ENCODE measurements at regions of chr16 and their contacts with region 1.

Region 1: DNA sequence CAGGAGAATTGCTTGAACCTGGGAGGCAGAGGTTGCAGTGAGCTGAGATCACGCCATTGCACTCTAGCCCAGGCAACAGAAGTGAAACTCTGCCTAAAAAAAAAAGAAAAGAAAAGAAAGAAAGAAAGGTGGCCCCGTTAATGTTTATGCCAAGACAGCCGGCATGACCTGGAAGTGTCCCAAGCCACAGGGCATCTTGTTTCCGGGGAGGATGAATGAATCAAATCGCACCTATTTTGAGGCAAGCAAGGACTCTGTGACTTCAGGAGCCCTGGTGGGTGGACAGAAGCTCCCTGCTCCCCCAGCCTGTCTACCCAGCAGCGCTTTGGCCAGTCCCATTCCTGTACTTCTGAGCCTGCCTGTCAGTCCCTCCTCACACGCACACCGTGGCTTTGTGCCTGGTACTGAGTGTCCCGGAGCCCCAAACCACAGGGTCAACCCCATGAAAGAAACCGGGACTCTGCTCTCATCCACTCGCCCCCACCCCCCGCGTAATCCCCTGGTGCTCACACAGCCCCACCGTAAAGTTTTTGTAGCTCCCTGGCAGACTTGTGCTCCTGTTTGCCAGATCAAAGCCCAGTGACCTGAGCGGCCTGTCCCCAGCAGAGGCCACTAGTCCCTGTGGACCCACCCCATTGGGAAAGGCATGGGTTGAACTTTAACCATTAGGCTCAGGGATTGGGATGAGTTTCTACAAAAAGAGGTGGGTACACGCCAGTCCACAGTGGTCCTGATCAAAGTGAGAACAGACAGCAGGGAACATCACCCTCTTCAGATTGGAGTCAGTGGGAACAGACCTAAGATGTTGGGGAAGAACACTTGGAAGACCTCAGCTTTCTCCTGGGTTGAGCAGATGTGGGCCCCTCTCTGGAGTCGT is 19.3 kb downstream of the CD2BP2 start:
- DNase-seq: peak; percentile 64 to 75
- ATAC-seq: peak; percentile 52 to 67
- H3K4me3 ChIP-seq: peak overlapping the region; percentile 66 to 85 (median 77)
- H3K27ac ChIP-seq: peak overlapping the region; percentile 89 to 99 (median 96)
- H3K4me1 ChIP-seq: peaks cover 5 to 32% of the 10 kb centered on the region in 2 donors
- H3K27me3 ChIP-seq: no peaks in the 10 kb centered on the region
- CTCF ChIP-seq: no peak
- POLR2A ChIP-seq: no peak

Region 2: DNA sequence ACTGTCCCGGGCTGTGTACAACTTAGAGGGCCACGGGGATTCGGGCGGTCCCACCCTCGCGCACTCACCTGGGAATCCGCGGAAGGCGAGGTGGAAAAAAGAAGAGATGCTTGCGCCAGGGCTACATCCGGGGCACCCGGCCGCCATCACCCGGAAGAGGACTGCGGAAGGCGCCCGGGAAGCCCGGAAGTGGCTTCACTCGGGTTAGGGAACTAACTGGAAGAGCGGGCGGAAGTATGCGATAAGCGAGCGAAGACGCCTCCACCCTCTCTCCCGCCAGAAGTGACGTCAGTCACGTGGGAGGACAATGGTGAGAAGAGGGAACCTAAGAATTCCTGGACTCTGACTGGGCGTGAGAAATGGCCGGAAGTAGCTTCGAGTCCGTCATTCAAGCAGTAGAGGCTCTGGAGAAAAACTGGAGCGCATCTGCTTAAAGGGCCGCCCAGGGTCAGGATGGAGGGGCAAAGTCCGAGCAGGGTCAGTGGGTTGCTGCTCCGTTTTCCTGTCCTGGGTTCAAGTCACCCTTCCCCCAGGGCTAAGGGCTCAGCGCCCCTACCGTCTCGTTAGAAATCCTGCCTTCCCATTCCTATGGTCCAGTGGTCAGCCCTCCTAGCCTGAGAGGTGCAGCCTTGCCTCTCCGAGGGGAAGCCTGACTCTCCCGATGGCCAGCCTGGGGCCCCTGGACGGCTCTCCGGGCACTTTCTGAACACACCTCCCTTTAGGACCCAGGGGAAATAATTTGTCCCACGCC is 19.5 kb after region 1 on chr16 and contains the start of gene CD2BP2:
- in situ Hi-C with region 1: no loop called
- intact Hi-C with region 1: loop called (anchors 1 kb)
- DNase-seq: peak; percentile 96 to 97
- ATAC-seq: peak; percentile 91 to 92
- H3K4me3 ChIP-seq: peak within 1 kb of the TSS; percentile 96 to 100 (median 97)
- H3K27ac ChIP-seq: peak within 1 kb of the TSS; percentile 92 to 97 (median 94)
- H3K4me1 ChIP-seq: peaks cover 43 to 48% of the 10 kb centered on the region in 2 donors
- H3K27me3 ChIP-seq: no peaks in the 10 kb centered on the region
- CTCF ChIP-seq: no peak
- POLR2A ChIP-seq: peak; percentile 46
- total RNA-seq, gene CD2BP2: 33.4 to 53.8 (median 40.9) TPM

Measured in gastrocnemius medialis (tissue), 4 donors.